ENCODE measurements at regions of chr22 and their contacts with region 1.

Region 1: DNA sequence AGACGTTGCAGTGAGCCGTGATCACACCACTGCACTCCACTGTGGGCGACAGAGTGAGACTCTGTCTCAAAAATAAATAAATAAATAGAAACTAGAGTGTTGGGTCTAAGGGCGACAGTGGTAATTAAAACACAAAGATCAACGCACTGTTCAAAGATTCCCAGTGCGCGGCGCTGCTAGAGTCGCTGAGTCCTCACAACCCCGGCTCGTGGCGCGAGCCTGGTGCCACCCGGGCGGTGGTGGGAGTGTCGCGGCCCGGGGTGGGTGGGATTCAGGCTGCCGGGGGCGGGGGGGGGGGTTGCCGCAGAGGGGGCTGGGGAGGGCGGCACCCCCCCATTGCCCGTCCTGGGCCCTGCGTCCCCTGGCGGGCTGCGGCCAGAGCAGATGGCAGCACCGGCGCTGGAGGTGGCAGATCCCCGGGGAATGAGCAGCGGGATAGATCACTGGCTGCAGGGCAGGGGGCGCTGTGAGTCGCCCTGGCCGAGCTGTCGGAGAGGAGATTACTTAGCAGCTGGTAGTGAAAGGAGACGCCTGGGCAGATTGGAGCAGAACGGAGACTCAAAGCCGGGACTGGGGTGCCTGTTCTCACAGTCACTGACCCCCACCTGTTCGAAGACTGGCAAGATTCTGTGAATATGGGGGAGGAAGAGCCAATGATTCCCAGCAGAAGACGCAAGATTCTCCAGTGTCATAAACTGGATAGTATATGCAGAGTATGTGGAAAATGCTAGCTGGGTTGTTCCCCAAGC is 30.2 kb upstream of the APOBEC3A start:
- DNase-seq: peak; percentile 77 to 85 (median 84)
- H3K4me3 ChIP-seq: peak overlapping the region in 2 of 3 experiments; percentile 14 to 48
- H3K4me3 Mint-ChIP-seq: peak overlapping the region; percentile 72 to 94
- H3K27ac ChIP-seq: no peak overlapping the region
- H3K27ac Mint-ChIP-seq: peak overlapping the region in 5 of 7 donors; percentile 74 to 92 (median 85)
- H3K4me1 ChIP-seq: peaks cover 4 to 7% of the 10 kb centered on the region in 2 donors
- H3K4me1 Mint-ChIP-seq: peaks cover 11% of the 10 kb centered on the region
- H3K27me3 ChIP-seq: peaks cover 20 to 40% of the 10 kb centered on the region in 2 donors
- H3K27me3 Mint-ChIP-seq: peaks cover 38 to 62% (median 59%) of the 10 kb centered on the region in 3 donors
- CTCF ChIP-seq: peak; percentile 92

Region 2: DNA sequence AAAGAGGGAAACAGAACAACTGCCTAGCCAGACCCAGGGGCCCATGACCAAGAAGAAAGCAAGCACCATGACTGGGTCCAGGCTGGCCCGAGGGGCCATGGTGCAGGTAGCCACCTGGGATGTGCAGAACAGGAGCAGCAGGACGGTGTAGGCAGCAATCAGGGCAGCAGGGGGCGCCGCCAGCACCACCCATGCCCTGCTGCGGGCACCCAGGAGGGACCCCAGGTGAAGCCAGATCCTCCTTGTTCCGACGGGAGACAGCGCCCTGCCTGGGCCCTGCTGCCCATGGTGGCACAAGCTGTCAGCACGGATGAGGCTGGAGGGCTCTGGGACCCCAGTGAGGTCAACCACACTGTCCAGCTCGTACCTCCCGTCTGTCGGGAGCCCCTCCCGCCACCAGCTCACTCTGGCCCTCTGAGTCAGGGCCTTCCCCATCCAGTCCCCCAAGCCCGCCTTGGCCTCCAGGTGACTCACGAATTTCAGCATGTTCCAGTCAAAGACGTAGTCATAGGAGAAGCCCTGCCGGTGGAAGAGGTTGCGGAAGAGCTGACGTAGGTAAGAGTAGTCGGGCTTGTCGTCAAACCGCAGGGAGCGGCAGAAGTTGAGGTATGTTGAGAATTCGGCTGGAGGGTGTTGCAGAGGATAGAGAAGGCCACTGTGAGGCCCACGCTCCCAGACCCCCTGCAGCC is 628.8 kb before region 1 on chr22:
- intact Hi-C with region 1: no loop called
- DNase-seq: peak in 2 of 3 donors; percentile 21 to 23
- H3K4me3 ChIP-seq: no peak overlapping the region
- H3K4me3 Mint-ChIP-seq: no peak overlapping the region
- H3K27ac ChIP-seq: no peak overlapping the region
- H3K27ac Mint-ChIP-seq: peak overlapping the region in 3 of 7 donors; percentile 19 to 57 (median 30)
- H3K4me1 ChIP-seq: no peaks in the 10 kb centered on the region
- H3K4me1 Mint-ChIP-seq: no peaks in the 10 kb centered on the region
- H3K27me3 ChIP-seq: no peaks in the 10 kb centered on the region
- H3K27me3 Mint-ChIP-seq: peaks cover 0 to 1% (median 0%) of the 10 kb centered on the region in 3 donors
- CTCF ChIP-seq: peak; percentile 75

Region 3: DNA sequence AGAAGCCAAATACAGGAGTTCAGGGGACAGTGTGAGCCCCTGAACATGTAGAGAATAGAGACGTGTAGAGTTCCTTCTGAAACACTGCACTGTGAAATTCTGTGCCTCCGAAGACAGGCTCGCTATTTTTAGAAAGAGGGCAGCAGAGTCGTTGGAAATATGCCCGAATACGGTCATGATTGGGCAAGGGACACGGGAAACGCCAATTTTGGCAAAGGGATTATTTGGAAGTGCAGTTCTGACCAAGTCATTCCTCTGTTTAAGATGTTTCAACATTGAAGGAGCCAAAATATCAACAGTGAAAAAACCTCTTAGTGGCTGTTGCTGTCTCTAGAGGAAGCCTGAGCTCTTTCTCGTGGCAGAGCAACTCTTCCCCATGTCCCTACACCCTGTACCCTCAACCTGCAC is 45.7 kb before region 1 on chr22:
- intact Hi-C with region 1: no loop called
- DNase-seq: no peak
- H3K4me3 ChIP-seq: no peak overlapping the region
- H3K4me3 Mint-ChIP-seq: peak overlapping the region in 1 of 2 donors; percentile 46
- H3K27ac ChIP-seq: no peak overlapping the region
- H3K27ac Mint-ChIP-seq: no peak overlapping the region
- H3K4me1 ChIP-seq: peaks cover 9% of the 10 kb centered on the region in 2 donors
- H3K4me1 Mint-ChIP-seq: peaks cover 17% of the 10 kb centered on the region
- H3K27me3 ChIP-seq: no peaks in the 10 kb centered on the region
- H3K27me3 Mint-ChIP-seq: peaks cover 8 to 10% (median 8%) of the 10 kb centered on the region in 3 donors
- CTCF ChIP-seq: no peak

Region 4: GRCh38 chr22:38967451-38968450 is 40.5 kb after region 1 on chr22:
- intact Hi-C with region 1: loop called (anchors 2 to 5 kb)
- DNase-seq: peak; percentile 98 to 100 (median 99)
- H3K4me3 ChIP-seq: peak overlapping the region in 1 of 3 experiments; percentile 33
- H3K4me3 Mint-ChIP-seq: peak overlapping the region in 1 of 2 donors; percentile 64
- H3K27ac ChIP-seq: peak overlapping the region; percentile 80 to 88
- H3K27ac Mint-ChIP-seq: peak overlapping the region; percentile 91 to 99 (median 97)
- H3K4me1 ChIP-seq: peaks cover 86 to 95% of the 10 kb centered on the region in 2 donors
- H3K4me1 Mint-ChIP-seq: peaks cover 94% of the 10 kb centered on the region
- H3K27me3 ChIP-seq: no peaks in the 10 kb centered on the region
- H3K27me3 Mint-ChIP-seq: peaks cover 3 to 8% (median 4%) of the 10 kb centered on the region in 3 donors
- CTCF ChIP-seq: no peak

Region 5: GRCh38 chr22:38973289-38974169 is 46.3 kb after region 1 on chr22:
- intact Hi-C with region 1: loop called (anchors 2 to 5 kb)
- DNase-seq: peak; percentile 48 to 60 (median 56)
- H3K4me3 ChIP-seq: no peak overlapping the region
- H3K4me3 Mint-ChIP-seq: no peak overlapping the region
- H3K27ac ChIP-seq: no peak overlapping the region
- H3K27ac Mint-ChIP-seq: peak overlapping the region in 5 of 7 donors; percentile 21 to 81 (median 69)
- H3K4me1 ChIP-seq: peaks cover 53 to 62% of the 10 kb centered on the region in 2 donors
- H3K4me1 Mint-ChIP-seq: peaks cover 56% of the 10 kb centered on the region
- H3K27me3 ChIP-seq: no peaks in the 10 kb centered on the region
- H3K27me3 Mint-ChIP-seq: peaks cover 6 to 12% (median 6%) of the 10 kb centered on the region in 3 donors
- CTCF ChIP-seq: peak; percentile 95

Region 6: GRCh38 chr22:39003165-39003638 is 76.0 kb after region 1 on chr22:
- intact Hi-C with region 1: loop called (anchors 1 to 5 kb)
- DNase-seq: peak; percentile 82 to 86 (median 86)
- H3K4me3 ChIP-seq: no peak overlapping the region
- H3K4me3 Mint-ChIP-seq: no peak overlapping the region
- H3K27ac ChIP-seq: no peak overlapping the region
- H3K27ac Mint-ChIP-seq: peak overlapping the region in 4 of 7 donors; percentile 13 to 79 (median 43)
- H3K4me1 ChIP-seq: peaks cover 8 to 10% of the 10 kb centered on the region in 2 donors
- H3K4me1 Mint-ChIP-seq: peaks cover 14% of the 10 kb centered on the region
- H3K27me3 ChIP-seq: no peaks in the 10 kb centered on the region
- H3K27me3 Mint-ChIP-seq: peaks cover 13 to 20% (median 14%) of the 10 kb centered on the region in 3 donors
- CTCF ChIP-seq: peak; percentile 70

Region 7: DNA sequence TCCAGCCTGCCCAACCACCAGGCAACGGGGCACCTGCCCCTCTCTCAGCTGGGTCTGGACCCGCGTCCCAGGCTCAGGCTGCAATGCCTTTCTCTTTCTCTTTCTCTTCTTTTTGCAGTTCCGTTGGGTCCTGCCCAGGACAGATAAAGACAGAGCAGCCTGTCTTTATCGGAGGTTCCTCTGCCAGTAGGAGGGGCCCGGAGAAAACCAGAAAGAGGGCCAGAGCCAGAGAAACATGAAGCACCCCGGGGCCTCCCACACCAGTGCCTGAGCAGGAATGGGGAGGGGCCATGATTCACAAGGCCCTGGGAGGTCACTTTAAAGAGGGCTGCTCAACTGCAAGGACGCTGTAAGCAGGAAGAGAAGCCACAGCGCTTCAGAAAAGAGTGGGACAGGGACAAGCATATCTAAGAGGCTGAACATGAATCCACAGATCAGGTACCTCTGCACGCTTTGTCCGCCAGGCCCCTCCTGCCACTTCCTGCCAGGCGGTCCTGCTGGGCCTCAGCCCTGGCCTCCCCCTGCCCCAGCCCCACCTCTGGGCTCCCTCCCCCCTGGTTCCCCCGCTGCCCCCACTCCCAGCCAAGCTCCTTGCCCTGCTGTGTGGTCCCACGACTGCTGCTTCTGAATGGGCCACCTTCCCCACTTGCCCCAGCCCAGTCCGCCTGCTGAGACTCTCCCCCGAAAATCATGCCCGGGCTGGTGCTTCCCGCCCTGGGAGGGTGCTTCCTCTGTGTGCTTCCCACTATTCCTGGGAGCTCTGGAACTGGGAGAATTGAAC is 86.9 kb after region 1 on chr22 and contains the start of gene APOBEC3C:
- intact Hi-C with region 1: no loop called
- DNase-seq: peak; percentile 74 to 80 (median 77)
- H3K4me3 ChIP-seq: peak within 1 kb of the TSS; percentile 59 to 82 (median 78)
- H3K4me3 Mint-ChIP-seq: peak within 1 kb of the TSS; percentile 86 to 93
- H3K27ac ChIP-seq: peak within 1 kb of the TSS; percentile 63 to 88
- H3K27ac Mint-ChIP-seq: peak within 1 kb of the TSS; percentile 82 to 94 (median 91)
- H3K4me1 ChIP-seq: peaks cover 18 to 20% of the 10 kb centered on the region in 2 donors
- H3K4me1 Mint-ChIP-seq: peaks cover 17% of the 10 kb centered on the region
- H3K27me3 ChIP-seq: no peaks in the 10 kb centered on the region
- H3K27me3 Mint-ChIP-seq: peaks cover 0 to 2% (median 0%) of the 10 kb centered on the region in 3 donors
- CTCF ChIP-seq: no peak
- polyA plus RNA-seq, gene APOBEC3C: 19.7 to 86.3 (median 69.4) TPM

Measured in CD14-positive monocyte (primary cell).